Mucosa of descending colon (tissue), 3 donors: ENCODE measurements at regions of chr12 and their contacts with region 1.

Region 1: GRCh38 chr12:52139552-52140062 is 52.2 kb downstream of the KRT80 start:
- DNase-seq: peak in 2 of 3 donors; percentile 66 to 75
- ATAC-seq: peak; percentile 61
- H3K4me3 ChIP-seq: no peak overlapping the region
- H3K4me1 ChIP-seq: peaks cover 7% of the 10 kb centered on the region
- CTCF ChIP-seq: peak; percentile 39

Region 2: DNA sequence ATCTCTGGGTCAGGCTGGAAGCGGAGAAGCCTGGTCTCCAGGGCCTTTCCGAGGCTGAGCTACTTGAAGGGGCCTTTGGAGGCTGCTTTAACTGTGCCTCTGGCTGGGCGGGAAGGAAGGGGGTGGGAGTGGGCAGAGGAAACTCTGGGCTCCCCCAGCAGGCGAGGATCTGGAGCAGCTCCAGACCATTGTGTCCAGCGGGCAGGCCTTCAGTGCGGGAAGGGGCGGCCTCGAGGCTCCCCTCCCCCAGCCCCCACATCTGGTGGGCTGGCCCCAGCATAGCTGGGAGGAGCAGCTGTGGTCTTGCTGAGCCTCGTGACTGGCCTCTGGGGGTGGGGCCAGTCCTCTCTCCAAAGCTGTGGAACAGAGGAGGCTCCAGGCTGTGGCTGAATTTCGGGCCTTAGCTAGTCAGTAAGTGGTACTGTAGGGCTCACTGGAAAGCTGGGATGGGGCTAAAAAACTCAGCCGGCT is 129.4 kb before region 1 on chr12:
- intact Hi-C with region 1: no loop called
- DNase-seq: peak; percentile 61 to 76 (median 62)
- ATAC-seq: peak; percentile 28
- H3K4me3 ChIP-seq: no peak overlapping the region
- H3K4me1 ChIP-seq: no peaks in the 10 kb centered on the region
- CTCF ChIP-seq: no peak

Region 3: DNA sequence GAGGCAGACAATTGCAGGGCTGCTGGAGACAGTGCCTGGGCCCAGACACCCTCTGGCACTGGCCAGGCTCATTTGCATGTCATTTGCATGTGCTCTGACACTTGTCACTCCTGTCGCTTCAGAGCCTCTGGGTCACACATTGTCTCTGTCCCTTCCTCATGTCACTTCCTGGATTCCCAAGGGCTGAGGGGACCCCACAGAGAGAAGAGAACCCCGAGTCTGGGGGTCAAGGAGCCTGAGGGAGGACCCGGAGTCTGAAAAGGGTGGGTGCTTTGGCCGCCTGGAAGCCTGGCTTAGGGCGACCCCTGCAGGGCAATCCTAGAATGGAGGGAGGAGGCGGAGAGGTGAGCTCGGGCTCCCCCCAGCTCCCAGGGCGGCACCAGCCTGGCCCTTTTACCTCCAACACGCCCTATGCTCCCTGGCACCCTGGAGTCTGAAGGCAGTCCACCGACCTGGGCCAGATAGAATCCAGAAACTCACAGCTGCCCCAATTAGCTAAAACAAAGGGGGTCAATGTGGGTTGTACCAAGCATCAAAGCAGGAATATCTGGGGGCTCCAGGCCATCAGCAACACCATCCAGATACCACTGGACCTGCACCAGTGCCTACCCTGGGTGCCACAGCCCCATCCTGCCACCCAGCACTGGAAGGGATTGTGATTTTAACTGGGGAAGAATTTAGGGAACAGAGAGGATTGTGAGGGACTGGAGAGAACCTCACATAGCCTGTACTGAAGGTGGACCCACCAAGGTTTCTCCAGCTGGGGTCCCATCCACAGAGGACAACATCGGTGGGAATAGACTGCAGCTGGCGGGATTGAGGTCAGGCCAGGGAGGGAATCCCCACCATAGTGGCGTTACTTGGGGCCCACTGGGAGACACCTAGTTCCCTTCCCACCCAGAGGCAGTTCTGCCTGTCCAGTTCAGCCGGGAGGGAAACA is 731.0 kb after region 1 on chr12:
- intact Hi-C with region 1: loop called in 1 of 2 experiments (anchors 5 kb)
- DNase-seq: peak; percentile 87 to 95 (median 93)
- ATAC-seq: peak; percentile 68
- H3K4me3 ChIP-seq: no peak overlapping the region
- H3K4me1 ChIP-seq: peaks cover 40% of the 10 kb centered on the region
- CTCF ChIP-seq: peak; percentile 73